ENCODE measurements at regions of chr9 and their contacts with region 1.

Region 1: GRCh38 chr9:12904261-12905008 is 129.6 kb downstream of the LURAP1L start:
- DNase-seq: no peak
- H3K4me3 ChIP-seq: no peak overlapping the region
- CTCF ChIP-seq: no peak
- POLR2A ChIP-seq: no peak

Region 2: GRCh38 chr9:12933957-12934356 is 29.5 kb after region 1 on chr9:
- intact Hi-C with region 1: loop called (anchors 1 kb)
- DNase-seq: no peak
- H3K4me3 ChIP-seq: no peak overlapping the region
- CTCF ChIP-seq: no peak
- POLR2A ChIP-seq: no peak

Measured in lower leg skin (tissue), 4 donors.